ENCODE measurements at regions of chr2 and their contacts with region 1.

Region 1: GRCh38 chr2:71100195-71100964 is 29.6 kb downstream of the MCEE start:
- DNase-seq: peak; percentile 43
- ATAC-seq: peak; percentile 92
- H3K4me3 ChIP-seq: no peak overlapping the region
- H3K27ac ChIP-seq: no peak overlapping the region
- H3K4me1 ChIP-seq: no peaks in the 10 kb centered on the region
- H3K27me3 ChIP-seq: no peaks in the 10 kb centered on the region; the same call in 1 of the 2 replicates
- CTCF ChIP-seq: peak; percentile 91

Region 2: GRCh38 chr2:71130113-71130904 is 29.9 kb after region 1 on chr2 and contains the starts of genes MCEE and MPHOSPH10:
- CTCF ChIA-PET with region 1: interaction called, 17 read pairs
- POLR2A ChIA-PET with region 1: no interaction called
- in situ Hi-C with region 1: no loop called
- intact Hi-C with region 1: no loop called
- DNase-seq: peak; percentile 81
- ATAC-seq: peak; percentile 99
- H3K4me3 ChIP-seq: peak within 1 kb of the TSS; percentile 98 to 99
- H3K27ac ChIP-seq: peak within 1 kb of the TSS; percentile 91
- H3K4me1 ChIP-seq: peaks cover 10% of the 10 kb centered on the region
- H3K27me3 ChIP-seq: no peaks in the 10 kb centered on the region
- CTCF ChIP-seq: no peak
- total RNA-seq, gene MCEE: 4.8 TPM
- total RNA-seq, gene MPHOSPH10: 34.1 TPM

Region 3: DNA sequence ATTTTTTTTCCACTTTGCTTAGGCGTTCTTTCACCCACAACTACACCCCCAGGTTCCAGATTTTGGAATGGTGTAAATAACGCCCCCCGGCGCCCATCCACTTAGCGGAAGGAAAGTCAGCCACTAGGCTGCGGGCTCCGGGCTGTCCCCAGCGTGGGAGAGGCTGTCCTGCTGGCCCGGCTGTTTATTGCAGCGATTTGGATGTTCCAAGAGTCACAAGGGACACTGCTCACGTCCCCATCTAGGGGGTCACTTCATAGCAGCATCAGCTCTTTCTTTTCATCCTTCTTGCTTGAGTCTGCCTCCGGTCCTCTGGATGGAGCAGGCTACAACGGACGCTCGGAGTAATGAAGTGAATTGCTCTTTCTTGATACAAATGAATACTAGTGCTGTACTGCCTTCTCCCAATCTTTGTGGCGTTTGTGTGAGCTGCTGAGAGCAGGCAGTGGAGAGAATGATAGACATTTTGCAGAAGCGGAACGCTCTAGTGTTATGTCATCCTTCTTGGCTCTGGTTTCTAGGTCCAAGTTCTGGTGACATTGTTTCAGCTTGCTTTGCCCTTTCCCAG is 177.2 kb after region 1 on chr2:
- CTCF ChIA-PET with region 1: no interaction called
- POLR2A ChIA-PET with region 1: no interaction called
- in situ Hi-C with region 1: no loop called
- intact Hi-C with region 1: no loop called
- DNase-seq: peak; percentile 20
- ATAC-seq: peak; percentile 60
- H3K4me3 ChIP-seq: peak overlapping the region; percentile 60 to 67
- H3K27ac ChIP-seq: peak overlapping the region; percentile 75
- H3K4me1 ChIP-seq: peaks cover 26% of the 10 kb centered on the region
- H3K27me3 ChIP-seq: 0 out of 2 replicates have a peak, but pooled peaks cover 3% of the 10 kb centered on the region
- CTCF ChIP-seq: peak; percentile 57

Region 4: DNA sequence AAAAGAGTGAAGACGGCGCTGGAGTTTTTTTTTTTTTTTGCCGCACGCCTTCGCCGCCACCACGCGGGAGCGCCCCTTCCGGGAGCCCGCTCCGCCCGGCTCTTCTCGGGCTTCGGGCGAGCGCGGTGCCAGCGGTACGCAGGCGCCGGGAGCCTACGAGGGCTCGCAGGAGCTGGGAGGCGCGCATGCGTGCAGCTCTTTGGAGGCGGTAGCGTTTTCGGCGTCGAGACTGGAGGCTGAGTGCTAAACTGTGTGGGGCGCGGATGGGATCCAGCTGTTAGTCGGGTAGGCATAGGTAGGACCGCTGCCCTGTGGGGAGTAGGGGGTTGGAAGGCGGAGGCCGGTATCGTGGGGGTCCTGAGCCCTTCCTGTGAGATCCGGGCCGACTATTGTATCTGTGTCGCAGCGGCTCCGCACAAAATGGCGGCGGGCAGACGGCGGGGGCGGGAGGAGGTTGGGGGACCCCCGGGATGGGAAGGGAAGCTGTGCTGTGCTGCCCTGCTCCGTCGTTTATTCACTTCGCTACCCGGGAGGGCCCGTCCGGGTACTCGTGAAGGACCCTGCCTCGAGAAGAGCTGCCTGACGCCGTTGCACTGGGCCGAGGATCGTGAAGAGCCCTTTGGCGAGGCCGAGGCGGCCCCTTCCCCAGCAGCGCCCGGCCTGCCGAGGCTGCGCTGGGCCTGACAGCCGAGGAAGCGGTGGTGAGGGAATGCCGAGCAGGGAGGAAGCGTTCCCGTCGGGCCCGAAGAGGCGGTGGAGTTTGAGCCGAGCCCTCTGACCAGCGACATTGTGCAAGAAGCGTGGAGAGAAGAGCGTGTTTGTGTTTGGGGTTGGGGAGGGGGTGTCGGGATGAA is 231.4 kb after region 1 on chr2 and contains the start of gene ZNF638:
- CTCF ChIA-PET with region 1: interaction called, 15 read pairs
- POLR2A ChIA-PET with region 1: no interaction called
- in situ Hi-C with region 1: no loop called
- intact Hi-C with region 1: no loop called
- DNase-seq: peak; percentile 78
- ATAC-seq: peak; percentile 100
- H3K4me3 ChIP-seq: peak within 1 kb of the TSS; percentile 96
- H3K27ac ChIP-seq: peak within 1 kb of the TSS; percentile 93
- H3K4me1 ChIP-seq: peaks cover 14% of the 10 kb centered on the region; the same call in 1 of the 2 replicates
- H3K27me3 ChIP-seq: no peaks in the 10 kb centered on the region
- CTCF ChIP-seq: peak; percentile 98
- total RNA-seq, gene ZNF638: 80.8 TPM

Region 5: DNA sequence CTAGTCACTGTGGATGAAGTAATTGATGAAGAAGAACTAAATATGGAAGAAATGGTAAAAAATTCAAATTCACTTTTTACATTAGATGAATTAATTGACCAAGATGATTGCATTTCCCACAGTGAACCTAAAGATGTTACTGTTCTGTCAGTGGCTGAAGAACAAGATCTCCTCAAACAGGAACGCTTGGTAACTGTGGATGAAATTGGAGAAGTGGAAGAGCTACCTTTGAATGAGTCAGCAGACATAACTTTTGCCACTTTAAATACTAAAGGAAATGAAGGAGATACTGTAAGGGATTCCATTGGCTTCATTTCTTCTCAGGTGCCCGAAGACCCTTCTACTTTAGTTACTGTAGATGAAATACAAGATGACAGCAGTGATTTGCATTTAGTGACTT is 326.3 kb after region 1 on chr2:
- CTCF ChIA-PET with region 1: no interaction called
- POLR2A ChIA-PET with region 1: no interaction called
- in situ Hi-C with region 1: no loop called
- intact Hi-C with region 1: no loop called
- DNase-seq: no peak
- ATAC-seq: no peak
- H3K4me3 ChIP-seq: no peak overlapping the region
- H3K27ac ChIP-seq: no peak overlapping the region
- H3K4me1 ChIP-seq: no peaks in the 10 kb centered on the region; the same call in 1 of the 2 replicates
- H3K27me3 ChIP-seq: no peaks in the 10 kb centered on the region
- CTCF ChIP-seq: no peak

Measured in Panc1 (cell line).